Dendritic cell treated with granulocyte-macrophage colony-stimulating factor and Interleukin-4, amounts not matched to agents 40 ng/mL and 50 ng/mL, for 4 days (primary cell): ENCODE measurements at regions of chr14 and their contacts with region 1.

Region 1: GRCh38 chr14:88044851-88045339 is 40.0 kb downstream of the GPR65 start:
- H3K4me3 Mint-ChIP-seq: peak overlapping the region; percentile 35
- H3K27ac Mint-ChIP-seq: peak overlapping the region; percentile 80
- H3K4me1 Mint-ChIP-seq: peaks cover 56% of the 10 kb centered on the region
- H3K27me3 Mint-ChIP-seq: no peaks in the 10 kb centered on the region

Region 2: DNA sequence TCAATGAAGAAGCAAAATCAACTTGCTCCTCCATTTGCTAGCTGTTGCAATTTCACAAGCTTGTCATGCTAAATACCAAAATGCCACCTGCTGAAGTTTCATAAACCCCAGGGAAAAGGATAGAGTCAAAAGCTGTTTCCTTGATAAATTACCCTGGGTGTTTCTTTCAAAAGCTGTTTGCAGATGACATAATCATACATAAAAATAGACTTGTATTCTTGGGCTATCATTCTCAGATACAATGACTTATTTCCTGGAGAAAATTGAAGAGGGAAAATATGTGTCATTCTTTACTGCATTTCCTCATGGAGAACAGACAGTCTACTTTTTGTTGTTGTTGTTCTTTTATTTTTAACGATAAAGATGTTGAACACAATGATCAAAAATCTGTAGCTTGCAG is 171.2 kb before region 1 on chr14:
- intact Hi-C with region 1: no loop called
- H3K4me3 Mint-ChIP-seq: no peak overlapping the region
- H3K27ac Mint-ChIP-seq: no peak overlapping the region
- H3K4me1 Mint-ChIP-seq: no peaks in the 10 kb centered on the region
- H3K27me3 Mint-ChIP-seq: no peaks in the 10 kb centered on the region

Region 3: DNA sequence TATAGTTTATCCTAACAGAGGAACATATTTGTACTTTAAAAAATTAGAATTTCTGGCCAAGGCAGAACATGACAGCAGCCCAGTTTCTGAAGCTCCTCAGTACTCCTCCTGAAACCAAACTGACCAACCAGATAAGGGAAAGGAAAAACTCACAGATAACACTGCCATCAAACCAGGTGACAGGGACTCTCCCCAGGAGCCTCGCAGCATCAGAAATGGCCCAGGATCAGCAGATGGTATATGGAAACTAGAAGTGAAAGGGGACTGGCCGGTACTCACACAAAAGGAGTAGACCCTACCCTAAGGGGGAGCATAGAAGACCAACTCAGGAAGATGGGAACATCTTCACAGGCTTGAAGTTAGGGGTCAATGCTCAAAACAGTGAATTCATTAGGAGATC is 73.9 kb before region 1 on chr14:
- intact Hi-C with region 1: no loop called
- H3K4me3 Mint-ChIP-seq: no peak overlapping the region
- H3K27ac Mint-ChIP-seq: no peak overlapping the region
- H3K4me1 Mint-ChIP-seq: no peaks in the 10 kb centered on the region
- H3K27me3 Mint-ChIP-seq: no peaks in the 10 kb centered on the region

Region 4: GRCh38 chr14:87992718-87993628 is 51.9 kb before region 1 on chr14 and contains the start of gene GALC:
- intact Hi-C with region 1: loop called (anchors 10 kb)
- H3K4me3 Mint-ChIP-seq: peak within 1 kb of the TSS; percentile 83
- H3K27ac Mint-ChIP-seq: peak within 1 kb of the TSS; percentile 90
- H3K4me1 Mint-ChIP-seq: peaks cover 63% of the 10 kb centered on the region
- H3K27me3 Mint-ChIP-seq: no peaks in the 10 kb centered on the region

Region 5: DNA sequence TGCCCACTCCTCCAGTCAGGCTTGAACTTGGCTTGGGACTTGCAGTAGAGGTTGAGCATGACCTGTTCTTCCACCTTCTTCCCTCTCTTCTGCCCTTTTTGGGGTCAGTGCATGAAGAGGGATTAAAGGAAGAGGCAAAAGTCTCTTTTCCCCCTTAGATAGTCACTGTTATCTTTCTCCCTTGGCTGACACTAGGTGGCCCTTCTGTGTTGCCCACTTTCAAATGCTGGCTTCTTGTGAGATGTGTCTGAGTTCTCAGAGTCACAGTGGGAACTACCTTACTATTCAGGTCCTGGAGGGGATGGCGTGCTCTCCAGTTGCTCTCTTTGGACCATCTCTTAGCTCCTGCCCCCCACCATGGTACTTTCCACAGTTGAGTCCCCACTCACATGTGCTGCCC is 33.6 kb after region 1 on chr14:
- intact Hi-C with region 1: loop called (anchors 5 kb)
- H3K4me3 Mint-ChIP-seq: no peak overlapping the region
- H3K27ac Mint-ChIP-seq: no peak overlapping the region
- H3K4me1 Mint-ChIP-seq: peaks cover 16% of the 10 kb centered on the region
- H3K27me3 Mint-ChIP-seq: peaks cover 25% of the 10 kb centered on the region